Astrocyte of the cerebellum (primary cell): ENCODE measurements at regions of chr7 and their contacts with region 1.

Region 1: DNA sequence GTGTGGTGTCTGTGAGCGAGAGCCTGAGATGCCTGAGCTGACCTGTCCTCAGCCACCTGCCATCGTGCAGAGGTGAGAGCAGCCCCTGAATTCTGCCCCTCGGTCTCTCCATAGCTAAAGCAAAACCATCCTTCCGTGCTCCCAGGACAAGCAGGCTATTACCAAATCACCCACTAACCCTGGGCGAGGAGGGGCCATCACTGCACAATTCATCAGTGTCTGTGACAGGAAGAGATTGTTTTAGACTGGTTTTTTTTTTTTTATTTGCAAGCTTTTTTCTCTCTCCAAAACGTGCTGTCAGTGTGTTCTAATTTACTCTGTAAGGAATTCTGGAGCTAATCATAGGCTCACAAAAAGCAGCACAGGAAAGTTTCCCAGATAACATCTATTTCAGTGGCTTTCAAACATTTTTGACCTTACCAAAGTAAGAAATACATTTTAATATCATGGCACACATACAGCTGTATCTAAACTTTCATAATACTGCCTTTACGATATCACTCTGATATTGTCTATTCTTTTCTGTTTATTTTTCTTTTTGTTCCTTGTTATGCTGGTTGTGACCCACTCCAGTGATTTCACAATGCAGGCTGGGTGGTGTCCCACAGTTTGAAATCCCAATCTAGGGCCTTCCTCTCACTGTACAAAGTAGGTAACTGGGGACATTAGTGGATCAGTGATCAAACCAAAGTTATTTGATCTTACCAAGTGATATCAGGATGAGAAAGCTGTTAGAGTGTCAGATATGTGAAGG is 62.8 kb downstream of the EGFR start:
- DNase-seq: no peak
- H3K4me3 ChIP-seq: no peak overlapping the region
- CTCF ChIP-seq: no peak

Region 2: GRCh38 chr7:55129531-55130394 is 48.1 kb after region 1 on chr7:
- in situ Hi-C with region 1: loop called (anchors 5 kb)
- DNase-seq: no peak
- H3K4me3 ChIP-seq: no peak overlapping the region
- CTCF ChIP-seq: no peak

Region 3: GRCh38 chr7:55469271-55469681 is 387.6 kb after region 1 on chr7:
- in situ Hi-C with region 1: no loop called
- DNase-seq: no peak
- H3K4me3 ChIP-seq: no peak overlapping the region
- CTCF ChIP-seq: no peak